KBM-7 (cell line): ENCODE measurements at regions of chr7 and their contacts with region 1.

Region 1: DNA sequence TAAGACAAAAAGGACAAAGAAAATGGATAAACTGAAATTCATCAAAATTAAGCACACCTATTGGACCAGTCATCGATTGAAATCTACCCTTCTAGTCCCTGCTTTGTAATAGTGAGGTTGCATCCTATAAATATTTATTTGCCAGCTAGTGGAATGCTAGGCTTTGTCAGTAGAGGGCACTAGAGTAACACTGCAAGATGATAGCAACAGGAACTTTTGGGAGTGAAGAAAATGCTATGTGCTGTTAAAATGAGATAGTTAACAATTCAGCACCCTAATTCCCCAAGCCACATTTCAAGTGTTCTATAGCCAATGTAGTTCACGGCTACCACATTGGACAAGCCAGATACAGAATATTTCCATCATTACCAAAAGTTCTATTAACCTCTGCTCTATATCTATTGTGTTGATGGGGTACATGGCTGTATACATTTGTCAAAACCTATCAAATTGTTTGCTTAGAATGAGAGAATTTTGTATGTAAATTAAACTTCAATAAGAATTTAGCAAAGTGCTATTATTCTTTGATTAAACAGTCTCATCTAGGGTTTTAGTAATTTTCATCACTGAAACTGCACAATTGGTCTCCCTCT is 69.8 kb downstream of the LSMEM1 start:
- DNase-seq: peak; percentile 68

Region 2: GRCh38 chr7:112362731-112363131 is 187.8 kb before region 1 on chr7:
- in situ Hi-C with region 1: no loop called
- DNase-seq: no peak

Region 3: GRCh38 chr7:112898432-112899290 is 348.1 kb after region 1 on chr7:
- in situ Hi-C with region 1: loop called (anchors 25 kb)
- DNase-seq: peak; percentile 81